Caco-2 (cell line): ENCODE measurements at regions of chr1 and their contacts with region 1.

Region 1: DNA sequence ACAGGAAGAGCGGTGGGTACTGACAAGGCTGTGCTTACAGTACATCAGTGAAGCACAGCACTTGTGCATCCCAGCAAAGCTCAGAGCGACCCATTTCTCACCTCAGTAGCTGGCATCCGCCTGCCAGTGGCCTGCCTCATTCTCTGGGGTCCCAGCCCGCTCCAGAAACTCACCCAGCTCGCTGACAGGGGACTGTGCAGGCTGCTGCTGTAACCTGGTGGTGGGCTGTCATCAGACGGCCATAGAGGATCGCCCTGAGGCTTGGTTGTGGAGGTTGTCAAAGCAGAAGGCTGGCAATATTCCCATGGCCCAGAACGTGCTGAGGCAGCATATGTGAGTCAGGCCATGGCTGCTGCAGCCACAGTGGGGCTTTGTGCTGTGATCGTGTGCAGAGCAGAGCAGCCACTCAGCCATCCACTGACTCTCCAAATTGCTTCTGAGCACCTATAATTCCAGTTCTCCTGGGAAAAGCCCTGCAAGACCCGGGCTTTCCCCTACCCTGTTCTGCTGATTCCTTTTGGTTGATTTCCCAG is 13.6 kb upstream of the GPR137B start:
- DNase-seq: no peak
- H3K4me3 ChIP-seq: no peak overlapping the region
- H3K4me3 Mint-ChIP-seq: no peak overlapping the region
- H3K27ac Mint-ChIP-seq: no peak overlapping the region
- H3K4me1 ChIP-seq: peaks cover 24% of the 10 kb centered on the region; the same call in 1 of the 2 replicates
- H3K4me1 Mint-ChIP-seq: peaks cover 6% of the 10 kb centered on the region
- H3K27me3 ChIP-seq: no peaks in the 10 kb centered on the region
- H3K27me3 Mint-ChIP-seq: no peaks in the 10 kb centered on the region
- CTCF ChIP-seq: no peak

Region 2: GRCh38 chr1:236089046-236089773 is 39.5 kb before region 1 on chr1:
- CTCF ChIA-PET with region 1: no interaction called
- POLR2A ChIA-PET with region 1: no interaction called
- intact Hi-C with region 1: no loop called
- DNase-seq: no peak
- H3K4me3 ChIP-seq: no peak overlapping the region
- H3K4me3 Mint-ChIP-seq: no peak overlapping the region
- H3K27ac Mint-ChIP-seq: no peak overlapping the region
- H3K4me1 ChIP-seq: peaks cover 9% of the 10 kb centered on the region
- H3K4me1 Mint-ChIP-seq: peaks cover 6% of the 10 kb centered on the region
- H3K27me3 ChIP-seq: no peaks in the 10 kb centered on the region
- H3K27me3 Mint-ChIP-seq: no peaks in the 10 kb centered on the region
- CTCF ChIP-seq: no peak

Region 3: GRCh38 chr1:236142253-236143103 is 13.8 kb after region 1 on chr1 and contains the start of gene GPR137B:
- CTCF ChIA-PET with region 1: no interaction called
- POLR2A ChIA-PET with region 1: no interaction called
- intact Hi-C with region 1: loop called (anchors 2 kb)
- DNase-seq: peak in 1 of 2 experiments; percentile 20
- H3K4me3 ChIP-seq: peak within 1 kb of the TSS; percentile 53
- H3K4me3 Mint-ChIP-seq: peak within 1 kb of the TSS; percentile 94
- H3K27ac Mint-ChIP-seq: peak within 1 kb of the TSS; percentile 80
- H3K4me1 ChIP-seq: peaks cover 8% of the 10 kb centered on the region; the same call in 1 of the 2 replicates
- H3K4me1 Mint-ChIP-seq: peaks cover 12% of the 10 kb centered on the region
- H3K27me3 ChIP-seq: no peaks in the 10 kb centered on the region; the same call in none of the 2 replicates
- H3K27me3 Mint-ChIP-seq: peaks cover 20% of the 10 kb centered on the region
- CTCF ChIP-seq: no peak
- total RNA-seq, gene GPR137B: 5.5 and 5.9 TPM in 2 replicates